AG04449 (cell line): ENCODE measurements at regions of chr12 and their contacts with region 1.

Region 1: GRCh38 chr12:54214553-54215406 is 26.0 kb upstream of the SMUG1 start:
- DNase-seq: no peak
- H3K4me3 ChIP-seq: peak overlapping the region; percentile 36
- CTCF ChIP-seq: peak; percentile 99

Region 2: GRCh38 chr12:53907103-53907502 is 307.7 kb before region 1 on chr12:
- CTCF ChIA-PET with region 1: no interaction called
- POLR2A ChIA-PET with region 1: no interaction called
- DNase-seq: no peak
- H3K4me3 ChIP-seq: no peak overlapping the region
- CTCF ChIP-seq: no peak

Region 3: GRCh38 chr12:53974084-53975063 is 240.4 kb before region 1 on chr12 and contains the start of gene HOTAIR:
- CTCF ChIA-PET with region 1: interaction called, 23 read pairs
- POLR2A ChIA-PET with region 1: no interaction called
- DNase-seq: no peak
- H3K4me3 ChIP-seq: peak within 1 kb of the TSS; percentile 76
- CTCF ChIP-seq: no peak

Region 4: DNA sequence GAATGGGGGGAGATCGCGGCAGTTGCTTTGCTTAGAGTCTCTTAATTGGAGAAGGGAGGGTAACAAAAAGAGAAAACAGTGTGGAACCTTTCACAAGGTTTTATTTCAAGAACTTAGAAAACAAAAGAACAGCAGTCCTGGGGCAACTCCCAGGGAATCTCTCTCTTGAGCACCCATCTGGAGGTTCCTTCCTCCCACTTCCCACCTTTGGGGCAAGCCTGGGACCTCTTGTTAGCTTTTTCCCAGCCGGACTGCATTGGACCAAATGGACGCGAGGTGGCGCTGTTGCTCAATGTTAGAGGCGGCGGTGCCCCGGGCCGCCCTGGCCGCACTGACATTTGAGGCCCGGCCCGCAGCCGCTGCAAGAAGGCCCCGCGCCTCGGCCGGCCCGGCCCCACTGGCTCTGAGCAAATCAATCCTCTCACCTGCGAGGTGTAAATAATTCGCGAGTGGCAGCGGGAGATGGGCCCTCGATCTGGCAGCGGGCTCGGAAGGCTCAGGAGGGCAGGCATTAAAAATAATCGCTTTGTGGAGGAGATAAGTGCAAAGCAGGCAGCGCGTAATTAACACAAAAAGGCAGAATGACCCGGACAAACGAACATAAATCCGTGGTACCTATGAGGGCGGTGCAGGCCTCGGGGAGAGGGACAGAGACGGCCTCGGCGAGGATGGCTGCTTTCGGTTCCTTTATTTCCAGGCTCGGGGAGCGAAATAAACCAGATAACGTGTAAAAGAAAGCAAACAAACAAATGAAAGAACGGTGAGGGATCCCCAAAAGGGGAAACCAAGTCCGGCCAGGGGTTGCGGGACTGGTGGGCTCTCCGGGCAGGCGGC is 208.7 kb before region 1 on chr12:
- CTCF ChIA-PET with region 1: interaction called, 756 read pairs
- POLR2A ChIA-PET with region 1: interaction called, 3 read pairs
- DNase-seq: no peak
- H3K4me3 ChIP-seq: peak overlapping the region; percentile 96
- CTCF ChIP-seq: peak; percentile 90

Region 5: GRCh38 chr12:54140588-54141388 is 74.0 kb before region 1 on chr12:
- CTCF ChIA-PET with region 1: no interaction called
- POLR2A ChIA-PET with region 1: no interaction called
- DNase-seq: peak; percentile 40
- H3K4me3 ChIP-seq: no peak overlapping the region
- CTCF ChIP-seq: no peak

Region 6: DNA sequence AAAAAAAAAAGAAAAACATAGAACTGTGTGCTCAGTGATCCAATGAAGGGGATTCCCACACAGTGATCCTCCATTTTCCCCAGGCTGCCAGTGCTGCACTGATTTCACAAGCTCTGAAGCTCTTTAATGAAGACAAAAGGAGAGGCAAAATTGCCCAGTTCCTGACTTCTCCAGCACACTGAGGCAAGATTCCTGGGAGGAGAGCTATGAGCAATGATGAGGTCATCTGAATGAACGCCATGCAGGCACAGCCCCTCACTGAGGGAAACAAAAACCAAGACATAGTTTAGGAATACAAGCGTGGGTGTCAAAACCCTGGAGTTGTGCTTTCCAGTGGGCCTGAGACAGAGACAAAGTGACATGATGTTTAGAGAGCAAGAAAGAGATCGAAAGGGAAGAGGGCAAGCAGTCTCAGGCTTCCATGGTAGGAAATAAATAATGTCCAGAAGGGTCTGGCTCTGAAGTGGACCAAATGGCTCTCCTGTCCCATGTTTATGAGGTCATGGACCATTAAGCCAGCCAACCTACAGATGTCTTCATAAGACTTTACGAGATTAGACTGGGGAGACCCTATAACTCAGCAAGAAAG is 14.9 kb after region 1 on chr12:
- CTCF ChIA-PET with region 1: interaction called, 27 read pairs
- POLR2A ChIA-PET with region 1: no interaction called
- DNase-seq: peak; percentile 91
- H3K4me3 ChIP-seq: no peak overlapping the region
- CTCF ChIP-seq: no peak

Region 7: DNA sequence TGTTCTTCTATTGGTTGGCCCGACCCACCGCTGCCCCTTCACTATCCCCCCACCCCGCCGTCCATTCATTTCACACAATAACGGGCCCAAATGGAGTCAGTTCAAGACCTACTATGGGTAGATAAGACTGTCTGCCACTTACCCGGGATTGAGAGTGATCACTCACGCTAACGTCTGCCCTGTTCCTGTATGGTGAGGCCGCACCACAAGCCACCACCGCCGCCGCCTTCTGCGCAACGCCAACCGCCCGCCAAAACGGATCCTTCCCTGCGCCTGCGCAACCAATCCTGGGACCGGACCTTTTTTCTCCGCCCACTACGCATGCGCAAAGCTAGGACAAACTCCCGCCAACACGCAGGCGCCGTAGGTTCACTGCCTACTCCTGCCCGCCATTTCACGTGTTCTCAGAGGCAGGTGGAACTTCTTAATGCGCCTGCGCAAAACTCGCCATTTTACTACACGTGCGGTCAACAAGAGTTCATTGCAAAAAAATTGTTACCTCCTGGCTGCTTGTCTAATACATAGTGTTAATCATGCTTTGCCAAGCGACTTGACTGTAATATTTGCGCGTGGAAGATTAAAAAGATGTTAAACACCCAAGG is 65.2 kb after region 1 on chr12 and contains the start of gene CBX5:
- CTCF ChIA-PET with region 1: interaction called, 27 read pairs
- POLR2A ChIA-PET with region 1: no interaction called
- DNase-seq: peak; percentile 83
- H3K4me3 ChIP-seq: peak within 1 kb of the TSS; percentile 92
- CTCF ChIP-seq: no peak

Region 8: GRCh38 chr12:54352022-54352531 is 137.3 kb after region 1 on chr12:
- CTCF ChIA-PET with region 1: interaction called, 13 read pairs
- POLR2A ChIA-PET with region 1: no interaction called
- DNase-seq: no peak
- H3K4me3 ChIP-seq: no peak overlapping the region; the same call in 1 of the 2 replicates
- CTCF ChIP-seq: no peak